Activated naive CD4-positive, alpha-beta T cell treated with anti-CD3 and anti-CD28 coated beads, Interleukin-2, amount 10 ng/mL, durations not matched to agents 7 days and 5 days (primary cell): ENCODE measurements at regions of chr9 and their contacts with region 1.

Region 1: GRCh38 chr9:34252670-34253459 is 74.0 kb downstream of the UBAP1 start:
- DNase-seq: peak; percentile 76
- H3K4me3 Mint-ChIP-seq: no peak overlapping the region
- H3K27ac Mint-ChIP-seq: peak overlapping the region; percentile 42
- H3K4me1 Mint-ChIP-seq: peaks cover 18% of the 10 kb centered on the region
- H3K27me3 Mint-ChIP-seq: no peaks in the 10 kb centered on the region

Region 2: GRCh38 chr9:34242830-34243229 is 10.0 kb before region 1 on chr9:
- CTCF ChIA-PET with region 1: interaction called, 41 read pairs
- DNase-seq: no peak
- H3K4me3 Mint-ChIP-seq: no peak overlapping the region
- H3K27ac Mint-ChIP-seq: no peak overlapping the region
- H3K4me1 Mint-ChIP-seq: no peaks in the 10 kb centered on the region
- H3K27me3 Mint-ChIP-seq: no peaks in the 10 kb centered on the region

Region 3: DNA sequence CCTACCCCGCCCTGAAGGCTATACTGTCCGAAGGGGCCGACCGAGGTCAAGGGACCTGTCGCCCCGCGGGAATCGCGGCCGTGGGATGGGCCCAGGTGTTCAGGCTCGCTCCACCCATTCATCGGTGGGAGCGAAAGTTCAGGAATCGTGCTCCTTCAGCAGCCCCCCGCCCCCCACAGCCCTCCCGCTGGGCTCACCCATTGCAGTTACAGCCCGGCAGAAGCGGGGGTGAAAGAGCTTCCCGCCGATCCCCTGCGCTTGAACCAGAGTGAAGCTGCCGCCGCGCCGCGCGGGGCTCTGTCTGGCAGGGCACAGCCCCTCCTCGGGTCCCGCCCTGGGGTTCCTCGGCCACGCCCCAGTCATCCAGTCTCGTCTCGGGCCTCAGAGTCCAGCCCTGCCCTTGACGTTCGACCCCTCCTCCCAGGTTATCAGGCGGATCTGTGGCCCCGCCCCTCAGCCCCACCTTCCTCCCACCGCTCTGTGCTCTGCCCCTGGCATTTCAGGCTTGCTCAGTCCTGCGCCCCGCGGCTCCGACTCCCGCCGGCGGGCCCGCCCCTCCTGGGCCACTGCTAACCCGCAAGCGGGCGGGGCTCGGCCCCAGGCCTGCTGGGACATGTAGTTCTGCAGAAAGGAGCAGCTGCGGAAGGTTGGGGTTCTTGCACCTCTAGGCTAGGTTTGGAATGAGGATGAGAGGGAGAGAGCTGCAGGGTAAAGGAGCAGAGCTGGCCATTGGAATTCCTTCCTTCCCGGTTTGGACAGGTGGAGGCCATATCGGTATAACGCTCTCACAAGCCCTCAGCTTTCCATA is 123.9 kb after region 1 on chr9 and contains the start of gene MYORG:
- CTCF ChIA-PET with region 1: interaction called, 12 read pairs
- DNase-seq: peak; percentile 99
- H3K4me3 Mint-ChIP-seq: peak within 1 kb of the TSS; percentile 90
- H3K27ac Mint-ChIP-seq: peak within 1 kb of the TSS; percentile 82
- H3K4me1 Mint-ChIP-seq: peaks cover 48% of the 10 kb centered on the region
- H3K27me3 Mint-ChIP-seq: peaks cover 29% of the 10 kb centered on the region

Region 4: GRCh38 chr9:34759432-34760134 is 506.7 kb after region 1 on chr9:
- CTCF ChIA-PET with region 1: no interaction called
- DNase-seq: no peak
- H3K4me3 Mint-ChIP-seq: no peak overlapping the region
- H3K27ac Mint-ChIP-seq: no peak overlapping the region
- H3K4me1 Mint-ChIP-seq: peaks cover 9% of the 10 kb centered on the region
- H3K27me3 Mint-ChIP-seq: peaks cover 25% of the 10 kb centered on the region